Naive thymus-derived CD4-positive, alpha-beta T cell (primary cell): ENCODE measurements at regions of chr17 and their contacts with region 1.

Region 1: DNA sequence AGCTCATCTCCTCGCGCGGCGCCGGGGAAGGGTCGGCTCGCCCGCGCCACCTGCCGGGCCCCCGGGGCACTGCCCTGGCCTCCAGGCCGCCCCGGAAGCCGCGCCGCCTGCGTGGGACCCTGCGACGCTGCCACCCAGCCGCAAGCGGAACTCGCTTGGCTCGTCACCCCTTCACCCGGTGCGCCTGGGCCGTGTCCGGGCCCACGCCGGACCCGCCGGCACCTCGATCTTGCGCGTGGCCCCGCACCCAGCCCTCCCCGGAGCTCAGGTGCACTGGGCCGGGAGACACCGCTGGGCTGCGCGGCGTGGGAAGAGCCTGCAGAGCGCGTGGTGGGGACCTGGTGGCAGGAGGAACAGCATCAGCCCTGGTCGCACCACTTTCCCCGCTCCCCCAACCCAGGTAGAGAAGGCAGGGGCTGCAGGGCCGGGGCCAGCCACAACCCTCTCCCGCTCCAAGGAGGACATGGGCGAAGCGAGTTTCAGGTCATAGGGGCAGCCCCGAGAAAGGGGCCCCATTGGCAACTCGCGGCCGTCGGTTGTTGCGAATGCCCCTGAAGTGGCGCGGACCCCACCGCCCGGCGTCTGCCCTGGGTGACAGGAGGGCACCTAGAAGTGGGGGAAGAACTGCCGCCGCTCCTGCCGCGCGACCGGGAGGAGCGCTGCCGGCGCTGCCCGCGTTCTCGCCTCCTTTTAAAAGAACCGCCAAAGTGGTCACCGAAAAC is 363 bp upstream of the MIF4GD start:
- DNase-seq: peak; percentile 80 to 96 (median 90)
- ATAC-seq: peak; percentile 96
- H3K4me3 ChIP-seq: peak overlapping the region; percentile 75
- H3K4me3 Mint-ChIP-seq: peak overlapping the region; percentile 67 to 87 (median 84)
- H3K27ac ChIP-seq: peak overlapping the region; percentile 84
- H3K27ac Mint-ChIP-seq: peak overlapping the region; percentile 57 to 90 (median 85)
- H3K4me1 ChIP-seq: peaks cover 15 to 24% of the 10 kb centered on the region in 2 donors
- H3K4me1 Mint-ChIP-seq: peaks cover 5 to 41% (median 34%) of the 10 kb centered on the region in 7 donors
- H3K27me3 ChIP-seq: no peaks in the 10 kb centered on the region
- H3K27me3 Mint-ChIP-seq: no peaks in the 10 kb centered on the region

Region 2: GRCh38 chr17:75182569-75183450 is 88.6 kb before region 1 on chr17 and contains the start of gene SUMO2:
- CTCF ChIA-PET with region 1: no interaction called
- POLR2A ChIA-PET with region 1: interaction called, 22 read pairs
- intact Hi-C with region 1: loop called in 1 of 2 experiments (anchors 1 kb)
- DNase-seq: peak; percentile 90 to 97 (median 94)
- ATAC-seq: peak; percentile 92
- H3K4me3 ChIP-seq: peak within 1 kb of the TSS; percentile 56
- H3K4me3 Mint-ChIP-seq: peak within 1 kb of the TSS; percentile 87 to 100 (median 92)
- H3K27ac ChIP-seq: peak within 1 kb of the TSS; percentile 94
- H3K27ac Mint-ChIP-seq: peak within 1 kb of the TSS; percentile 92 to 99 (median 97)
- H3K4me1 ChIP-seq: peaks cover 22 to 26% of the 10 kb centered on the region in 2 donors
- H3K4me1 Mint-ChIP-seq: peaks cover 20 to 55% (median 38%) of the 10 kb centered on the region in 7 donors
- H3K27me3 ChIP-seq: no peaks in the 10 kb centered on the region
- H3K27me3 Mint-ChIP-seq: no peaks in the 10 kb centered on the region
- total RNA-seq, gene SUMO2: 201 to 494 (median 247) TPM

Region 3: DNA sequence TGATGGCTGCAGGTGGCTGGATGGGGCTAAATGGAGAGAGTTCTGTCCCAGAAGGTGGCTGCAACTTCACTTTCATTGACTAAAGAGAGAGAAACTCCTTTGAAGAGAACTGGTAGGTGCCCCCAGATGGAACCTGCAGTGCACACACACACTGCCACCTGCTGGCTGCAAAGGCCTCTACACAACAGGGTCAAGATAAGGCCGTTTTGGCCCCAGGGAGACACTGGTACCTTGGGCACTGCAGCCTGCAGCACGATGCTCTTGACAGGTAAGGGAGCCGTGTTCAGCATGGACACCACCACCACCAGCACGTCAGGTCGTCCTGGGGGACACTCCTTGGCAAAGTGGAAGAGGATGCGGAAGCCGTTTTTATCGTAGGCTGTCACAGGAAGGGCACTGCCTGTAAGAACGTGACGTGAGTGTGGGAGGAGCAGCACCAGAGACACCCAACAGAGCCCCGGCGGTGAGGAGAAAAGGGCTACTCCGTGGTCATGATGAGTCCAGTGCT is 32.7 kb before region 1 on chr17:
- CTCF ChIA-PET with region 1: interaction called, 7 read pairs
- POLR2A ChIA-PET with region 1: no interaction called
- intact Hi-C with region 1: loop called in 1 of 2 experiments (anchors 1 kb)
- DNase-seq: peak; percentile 33 to 60 (median 55)
- ATAC-seq: peak; percentile 83
- H3K4me3 ChIP-seq: no peak overlapping the region
- H3K4me3 Mint-ChIP-seq: peak overlapping the region in 4 of 10 donors; percentile 38 to 51 (median 46)
- H3K27ac ChIP-seq: no peak overlapping the region
- H3K27ac Mint-ChIP-seq: peak overlapping the region; percentile 7 to 93 (median 85)
- H3K4me1 ChIP-seq: peaks cover 0 to 28% of the 10 kb centered on the region in 2 donors
- H3K4me1 Mint-ChIP-seq: peaks cover 5 to 25% (median 12%) of the 10 kb centered on the region in 7 donors
- H3K27me3 ChIP-seq: no peaks in the 10 kb centered on the region
- H3K27me3 Mint-ChIP-seq: no peaks in the 10 kb centered on the region

Region 4: GRCh38 chr17:75319904-75320691 is 48.7 kb after region 1 on chr17:
- CTCF ChIA-PET with region 1: no interaction called
- POLR2A ChIA-PET with region 1: interaction called, 3 read pairs
- intact Hi-C with region 1: loop called in 1 of 2 experiments (anchors 1 kb)
- DNase-seq: no peak
- ATAC-seq: no peak
- H3K4me3 ChIP-seq: no peak overlapping the region
- H3K4me3 Mint-ChIP-seq: no peak overlapping the region
- H3K27ac ChIP-seq: no peak overlapping the region
- H3K27ac Mint-ChIP-seq: peak overlapping the region in 3 of 9 donors; percentile 13 to 51 (median 48)
- H3K4me1 ChIP-seq: peaks cover 4% of the 10 kb centered on the region in 2 donors
- H3K4me1 Mint-ChIP-seq: peaks cover 0 to 20% (median 9%) of the 10 kb centered on the region in 7 donors
- H3K27me3 ChIP-seq: no peaks in the 10 kb centered on the region
- H3K27me3 Mint-ChIP-seq: no peaks in the 10 kb centered on the region

Region 5: DNA sequence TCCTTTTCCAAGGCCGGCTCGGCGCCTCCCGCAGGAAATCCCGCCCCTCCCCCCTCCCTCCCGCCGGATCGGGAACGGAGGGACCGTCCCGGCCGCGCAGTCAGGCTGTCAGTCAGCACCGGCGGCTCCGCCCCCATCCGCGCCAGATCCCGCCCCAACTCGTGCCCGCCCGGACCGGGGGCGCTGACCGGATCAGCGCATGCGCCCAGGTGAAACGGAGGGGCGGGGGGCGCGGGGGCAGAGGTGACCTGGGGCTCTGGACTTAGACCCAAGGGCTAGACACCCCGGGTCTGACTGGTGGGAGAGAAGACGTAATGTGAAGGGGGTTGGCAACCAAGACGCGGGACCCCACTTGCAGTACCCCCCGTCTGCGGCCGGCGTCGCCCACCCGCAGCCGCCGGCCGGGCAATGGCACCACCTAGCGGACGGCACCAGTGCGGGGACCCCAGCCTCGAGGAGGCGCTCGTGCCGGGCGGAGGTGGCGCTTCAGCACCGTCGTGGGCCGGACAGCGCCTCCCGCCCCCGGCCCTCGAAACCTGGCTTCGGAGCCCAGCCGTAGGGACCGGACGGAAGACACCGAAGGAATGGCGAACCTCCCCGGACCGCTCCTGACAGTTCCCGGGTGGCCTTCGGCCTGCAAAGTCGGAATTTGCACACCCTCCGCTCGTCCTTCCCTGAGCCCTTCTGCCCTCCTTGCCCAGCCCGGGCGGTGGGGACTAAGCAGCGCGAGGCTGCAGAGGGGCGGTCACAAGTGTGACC is 244.3 kb after region 1 on chr17 and contains the start of gene CASKIN2:
- CTCF ChIA-PET with region 1: no interaction called
- POLR2A ChIA-PET with region 1: interaction called, 5 read pairs
- intact Hi-C with region 1: loop called (anchors 1 to 5 kb)
- DNase-seq: peak; percentile 57 to 88 (median 70)
- ATAC-seq: peak; percentile 80
- H3K4me3 ChIP-seq: peak within 1 kb of the TSS; percentile 97
- H3K4me3 Mint-ChIP-seq: peak within 1 kb of the TSS; percentile 69 to 85 (median 78)
- H3K27ac ChIP-seq: no peak within 1 kb of the TSS
- H3K27ac Mint-ChIP-seq: peak within 1 kb of the TSS in 4 of 9 donors; percentile 36 to 63 (median 47)
- H3K4me1 ChIP-seq: peaks cover 23 to 25% of the 10 kb centered on the region in 2 donors
- H3K4me1 Mint-ChIP-seq: peaks cover 18 to 28% (median 22%) of the 10 kb centered on the region in 7 donors
- H3K27me3 ChIP-seq: no peaks in the 10 kb centered on the region
- H3K27me3 Mint-ChIP-seq: peaks cover 0 to 14% (median 0%) of the 10 kb centered on the region in 5 donors
- total RNA-seq, gene CASKIN2: 0.22 to 1.2 (median 0.92) TPM

Region 6: DNA sequence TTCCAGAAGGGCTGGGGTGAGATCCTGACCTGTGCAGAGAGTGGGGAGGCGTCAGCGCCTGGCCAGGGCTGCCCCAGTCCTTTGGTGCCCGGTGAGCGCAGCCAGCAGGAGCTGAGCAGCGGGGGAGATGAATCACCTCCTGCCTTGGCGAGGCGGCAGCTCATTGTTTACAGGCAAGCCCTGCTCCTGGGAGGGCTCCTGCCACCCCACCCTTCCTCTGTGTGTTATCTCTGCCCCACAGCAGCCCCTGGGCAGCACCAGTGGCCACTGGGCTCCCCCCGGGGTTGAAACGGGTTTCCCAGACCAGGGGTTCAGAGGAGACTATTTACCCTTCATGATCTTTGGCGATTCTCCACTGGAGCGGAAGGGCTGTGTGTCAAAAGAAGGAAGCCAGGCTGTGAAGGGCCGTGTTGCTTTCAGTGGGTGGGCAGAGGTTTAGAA is 435.8 kb after region 1 on chr17:
- CTCF ChIA-PET with region 1: no interaction called
- POLR2A ChIA-PET with region 1: no interaction called
- intact Hi-C with region 1: no loop called
- DNase-seq: no peak
- ATAC-seq: no peak
- H3K4me3 ChIP-seq: no peak overlapping the region
- H3K4me3 Mint-ChIP-seq: no peak overlapping the region
- H3K27ac ChIP-seq: no peak overlapping the region
- H3K27ac Mint-ChIP-seq: peak overlapping the region in 2 of 9 donors; percentile 20 to 76
- H3K4me1 ChIP-seq: no peaks in the 10 kb centered on the region
- H3K4me1 Mint-ChIP-seq: peaks cover 0 to 8% (median 0%) of the 10 kb centered on the region in 7 donors
- H3K27me3 ChIP-seq: no peaks in the 10 kb centered on the region
- H3K27me3 Mint-ChIP-seq: peaks cover 0 to 9% (median 0%) of the 10 kb centered on the region in 5 donors